Activated B cell treated with CpG ODN at 0.5 μM for 24 hours (primary cell): ENCODE measurements at regions of chr7 and their contacts with region 1.

Region 1: DNA sequence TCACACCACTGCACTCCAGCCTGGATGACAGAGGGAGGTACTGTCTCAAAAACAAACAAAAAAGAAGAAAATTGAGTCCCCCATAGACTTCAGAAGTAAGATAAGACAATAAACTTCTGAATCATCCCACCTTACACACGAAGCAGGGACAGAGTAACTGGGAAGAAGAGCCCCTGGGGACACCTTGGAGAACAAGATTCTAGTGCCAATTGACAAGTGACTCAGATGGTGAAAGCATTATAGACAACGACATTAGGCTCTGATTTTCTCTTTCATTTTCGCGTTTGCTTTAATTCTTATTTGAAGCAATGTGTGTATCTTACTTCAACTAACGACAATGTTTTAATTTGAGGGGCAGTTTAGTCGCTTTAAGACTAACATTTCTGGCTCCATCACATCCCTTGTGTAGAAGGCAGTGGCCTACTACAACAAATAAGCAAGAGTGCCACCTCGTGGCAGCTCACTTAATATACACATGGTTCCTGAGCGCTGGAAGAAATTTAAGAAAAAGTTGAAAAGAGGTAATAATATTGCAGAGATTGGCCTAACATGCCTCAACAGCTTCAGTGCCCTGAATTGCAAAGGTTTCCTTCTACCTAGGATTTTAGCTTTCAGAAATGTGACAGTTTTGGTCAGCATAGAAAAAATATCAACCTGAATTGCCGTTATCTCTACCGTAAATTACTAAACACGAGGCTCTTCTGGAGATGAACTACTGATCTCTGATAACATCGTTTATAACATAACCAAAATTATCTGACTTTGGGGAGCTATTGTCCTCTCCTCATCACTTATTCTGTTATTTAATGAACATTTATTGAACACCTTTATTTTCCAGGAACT is 36.7 kb downstream of the ASNS start:
- DNase-seq: no peak
- ATAC-seq: peak; percentile 69
- H3K4me3 Mint-ChIP-seq: no peak overlapping the region
- H3K27ac Mint-ChIP-seq: no peak overlapping the region
- H3K4me1 Mint-ChIP-seq: no peaks in the 10 kb centered on the region
- H3K27me3 Mint-ChIP-seq: peaks cover 29% of the 10 kb centered on the region
- CTCF ChIP-seq: no peak

Region 2: DNA sequence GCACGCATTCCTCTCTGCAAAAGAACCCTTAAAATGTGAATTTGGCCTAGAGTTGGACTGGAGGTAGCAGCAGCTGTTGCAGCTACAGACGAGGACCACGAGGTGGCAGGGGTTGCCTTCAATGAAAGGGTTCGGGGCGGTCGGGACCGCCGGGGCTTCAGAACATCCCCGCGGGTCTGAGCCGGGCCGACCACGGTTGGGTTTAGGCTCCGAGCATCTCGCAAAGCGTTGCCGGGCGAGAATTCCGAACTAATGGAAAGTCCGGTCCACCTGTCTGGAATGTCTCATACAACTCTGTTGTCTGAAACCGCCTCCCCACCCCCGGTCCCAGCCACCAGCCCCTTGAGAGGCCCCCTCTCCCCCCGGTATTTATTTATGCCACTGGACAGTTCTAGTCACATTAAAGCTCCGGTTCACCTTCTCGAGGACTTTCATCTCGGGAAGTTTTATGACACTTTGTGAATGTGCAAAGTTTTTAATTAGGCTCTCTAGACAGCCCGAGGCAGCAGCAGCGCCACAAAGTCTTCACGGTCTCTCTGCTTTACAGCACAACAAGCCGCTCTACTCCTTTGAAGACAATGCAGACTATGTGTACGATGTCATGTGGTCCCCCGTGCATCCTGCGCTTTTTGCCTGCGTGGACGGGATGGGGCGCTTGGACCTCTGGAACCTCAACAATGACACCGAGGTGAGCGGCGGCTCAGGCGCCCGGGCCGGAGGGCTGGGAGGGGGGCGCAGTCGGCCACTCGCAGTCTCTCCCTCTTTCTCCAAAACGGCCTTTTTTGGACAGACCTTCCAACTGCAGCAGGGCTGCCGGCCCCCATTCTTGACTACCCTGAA is 1759.8 kb before region 1 on chr7:
- CTCF ChIA-PET with region 1: no interaction called
- POLR2A ChIA-PET with region 1: no interaction called
- intact Hi-C with region 1: loop called (anchors 10 kb)
- DNase-seq: peak; percentile 37
- ATAC-seq: peak; percentile 89
- H3K4me3 Mint-ChIP-seq: peak overlapping the region; percentile 84
- H3K27ac Mint-ChIP-seq: no peak overlapping the region
- H3K4me1 Mint-ChIP-seq: peaks cover 7% of the 10 kb centered on the region
- H3K27me3 Mint-ChIP-seq: peaks cover 27% of the 10 kb centered on the region
- CTCF ChIP-seq: peak; percentile 45

Region 3: GRCh38 chr7:97104719-97105238 is 730.7 kb before region 1 on chr7:
- CTCF ChIA-PET with region 1: interaction called, 44 read pairs
- POLR2A ChIA-PET with region 1: no interaction called
- intact Hi-C with region 1: loop called (anchors 1 kb)
- DNase-seq: peak; percentile 74
- ATAC-seq: peak; percentile 94
- H3K4me3 Mint-ChIP-seq: no peak overlapping the region
- H3K27ac Mint-ChIP-seq: no peak overlapping the region
- H3K4me1 Mint-ChIP-seq: no peaks in the 10 kb centered on the region
- H3K27me3 Mint-ChIP-seq: peaks cover 16% of the 10 kb centered on the region
- CTCF ChIP-seq: peak; percentile 72

Region 4: DNA sequence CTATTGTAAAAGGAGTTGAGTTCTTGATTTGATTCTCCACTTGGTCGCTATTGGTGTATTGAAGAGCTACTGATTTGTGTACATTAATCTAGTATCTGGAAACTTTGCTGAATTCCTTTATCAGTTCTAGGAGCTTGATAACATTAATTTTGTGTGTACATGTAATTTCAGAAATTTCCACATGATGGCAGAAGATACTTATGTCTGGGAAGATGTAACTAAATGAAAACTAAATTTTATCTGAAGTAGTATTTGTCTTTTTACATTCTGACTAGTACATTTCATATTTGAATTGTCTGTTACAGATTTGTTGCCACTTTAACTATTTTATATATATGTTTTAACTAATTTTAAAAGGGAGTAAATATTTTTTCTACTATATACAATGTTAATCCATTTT is 690.4 kb before region 1 on chr7:
- CTCF ChIA-PET with region 1: interaction called, 8 read pairs
- POLR2A ChIA-PET with region 1: no interaction called
- intact Hi-C with region 1: loop called (anchors 1 kb)
- DNase-seq: no peak
- ATAC-seq: no peak
- H3K4me3 Mint-ChIP-seq: no peak overlapping the region
- H3K27ac Mint-ChIP-seq: no peak overlapping the region
- H3K4me1 Mint-ChIP-seq: no peaks in the 10 kb centered on the region
- H3K27me3 Mint-ChIP-seq: no peaks in the 10 kb centered on the region
- CTCF ChIP-seq: no peak

Region 5: DNA sequence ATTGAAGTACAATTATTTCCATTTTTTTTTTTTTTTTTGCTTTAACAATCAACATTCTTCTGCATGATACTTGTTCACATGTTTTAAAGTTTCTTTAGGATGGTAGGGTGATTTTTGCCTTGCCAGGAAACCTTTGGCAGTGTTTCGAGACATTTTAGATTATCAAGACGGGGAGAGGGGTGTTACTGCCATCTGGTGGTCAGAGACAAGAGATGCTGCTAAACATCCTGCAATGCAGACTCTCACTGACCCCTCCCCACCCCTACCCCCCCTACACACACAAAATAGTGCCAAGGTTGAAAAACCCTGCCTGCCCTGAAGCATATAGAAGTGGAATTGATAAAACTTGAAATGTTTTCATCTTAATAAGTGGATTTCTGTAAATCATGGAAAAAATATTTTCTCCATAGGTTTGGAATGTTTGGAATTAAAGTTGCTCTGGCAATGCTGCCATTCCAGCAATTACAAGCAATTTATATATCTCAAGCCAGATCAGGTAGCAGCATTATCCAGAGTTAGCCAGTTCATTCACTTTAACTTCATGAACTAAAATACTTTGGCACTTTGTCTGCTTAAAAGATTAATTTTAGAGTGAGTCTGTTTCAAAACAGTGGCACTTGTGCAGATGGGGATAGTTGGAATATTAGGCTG is 655.9 kb before region 1 on chr7:
- CTCF ChIA-PET with region 1: no interaction called
- POLR2A ChIA-PET with region 1: no interaction called
- intact Hi-C with region 1: loop called (anchors 1 kb)
- DNase-seq: no peak
- ATAC-seq: peak; percentile 79
- H3K4me3 Mint-ChIP-seq: no peak overlapping the region
- H3K27ac Mint-ChIP-seq: no peak overlapping the region
- H3K4me1 Mint-ChIP-seq: peaks cover 6% of the 10 kb centered on the region
- H3K27me3 Mint-ChIP-seq: no peaks in the 10 kb centered on the region
- CTCF ChIP-seq: peak; percentile 63

Region 6: DNA sequence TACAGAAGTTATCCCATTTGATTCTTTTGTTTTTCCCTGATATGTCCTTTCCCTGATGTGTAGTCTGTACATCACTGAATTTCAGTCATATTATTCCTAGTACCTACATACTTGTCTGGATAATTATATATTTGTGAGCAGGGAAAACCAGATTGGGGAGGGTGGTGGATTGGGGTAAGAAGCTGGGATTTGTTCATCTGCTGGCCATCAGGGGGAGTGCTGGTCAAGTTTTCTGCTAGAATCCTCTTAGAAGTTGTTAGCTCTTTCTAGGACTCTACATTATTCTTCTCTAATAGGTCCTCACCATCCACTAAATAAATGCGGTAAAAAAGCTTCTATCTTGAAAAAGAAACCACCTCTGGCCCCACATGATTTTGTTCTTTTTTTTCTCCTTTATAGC is 336.3 kb before region 1 on chr7:
- CTCF ChIA-PET with region 1: interaction called, 3 read pairs
- POLR2A ChIA-PET with region 1: no interaction called
- intact Hi-C with region 1: loop called (anchors 5 kb)
- DNase-seq: no peak
- ATAC-seq: no peak
- H3K4me3 Mint-ChIP-seq: no peak overlapping the region
- H3K27ac Mint-ChIP-seq: no peak overlapping the region
- H3K4me1 Mint-ChIP-seq: no peaks in the 10 kb centered on the region
- H3K27me3 Mint-ChIP-seq: peaks cover 1% of the 10 kb centered on the region
- CTCF ChIP-seq: no peak